Gastrocnemius medialis (tissue), 4 donors: ENCODE measurements at regions of chr15 and their contacts with region 1.

Region 1: GRCh38 chr15:91055548-91056331 is 33.3 kb upstream of the VPS33B start:
- DNase-seq: peak; percentile 30 to 56
- ATAC-seq: peak; percentile 89 to 92
- H3K4me3 ChIP-seq: no peak overlapping the region
- H3K27ac ChIP-seq: no peak overlapping the region
- H3K4me1 ChIP-seq: no peaks in the 10 kb centered on the region
- H3K27me3 ChIP-seq: peaks cover 4 to 12% (median 8%) of the 10 kb centered on the region in 3 donors
- CTCF ChIP-seq: peak; percentile 53 to 83 (median 72)
- POLR2A ChIP-seq: no peak

Region 2: GRCh38 chr15:91032919-91033803 is 22.6 kb before region 1 on chr15:
- in situ Hi-C with region 1: no loop called
- intact Hi-C with region 1: no loop called
- DNase-seq: peak in 1 of 2 donors; percentile 50
- ATAC-seq: peak in 1 of 2 donors; percentile 64
- H3K4me3 ChIP-seq: no peak overlapping the region
- H3K27ac ChIP-seq: no peak overlapping the region
- H3K4me1 ChIP-seq: no peaks in the 10 kb centered on the region
- H3K27me3 ChIP-seq: no peaks in the 10 kb centered on the region
- CTCF ChIP-seq: peak; percentile 27 to 65 (median 38)
- POLR2A ChIP-seq: no peak

Region 3: DNA sequence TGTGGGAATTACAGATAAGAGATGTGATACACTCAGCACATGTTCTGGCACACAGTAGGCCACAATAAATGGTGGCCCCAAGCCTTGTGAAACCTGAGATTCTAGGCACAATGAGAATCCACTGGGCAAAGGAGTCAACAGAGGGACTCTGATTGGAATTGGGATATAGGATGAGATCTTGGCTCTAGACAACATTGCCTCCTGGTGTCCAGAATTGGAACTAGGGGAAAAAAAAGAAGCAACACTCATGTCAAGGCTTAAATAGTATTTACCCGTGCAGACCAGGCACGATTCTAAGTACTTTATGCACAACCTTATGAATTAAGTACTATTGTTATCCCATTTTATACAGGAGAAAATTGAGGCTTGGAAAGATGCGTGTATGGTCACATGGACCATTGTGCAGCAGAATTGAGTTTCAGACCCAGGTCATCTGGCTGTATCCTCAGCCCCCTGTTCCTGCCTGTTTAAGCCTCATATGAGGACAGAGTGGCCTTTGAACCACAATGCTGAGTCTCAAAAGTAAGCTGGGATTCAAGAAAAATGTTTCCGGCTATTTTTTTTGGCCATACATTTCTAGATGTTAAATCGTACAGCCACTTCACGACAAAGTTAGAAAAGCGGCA is 169.1 kb after region 1 on chr15:
- in situ Hi-C with region 1: loop called in 3 of 4 experiments (anchors 5 kb)
- intact Hi-C with region 1: loop called (anchors 1 kb)
- DNase-seq: no peak
- ATAC-seq: peak; percentile 69
- H3K4me3 ChIP-seq: no peak overlapping the region
- H3K27ac ChIP-seq: no peak overlapping the region
- H3K4me1 ChIP-seq: no peaks in the 10 kb centered on the region
- H3K27me3 ChIP-seq: no peaks in the 10 kb centered on the region
- CTCF ChIP-seq: peak; percentile 43 to 71 (median 61)
- POLR2A ChIP-seq: no peak